ENCODE measurements at regions of chr2 and their contacts with region 1.

Region 1: DNA sequence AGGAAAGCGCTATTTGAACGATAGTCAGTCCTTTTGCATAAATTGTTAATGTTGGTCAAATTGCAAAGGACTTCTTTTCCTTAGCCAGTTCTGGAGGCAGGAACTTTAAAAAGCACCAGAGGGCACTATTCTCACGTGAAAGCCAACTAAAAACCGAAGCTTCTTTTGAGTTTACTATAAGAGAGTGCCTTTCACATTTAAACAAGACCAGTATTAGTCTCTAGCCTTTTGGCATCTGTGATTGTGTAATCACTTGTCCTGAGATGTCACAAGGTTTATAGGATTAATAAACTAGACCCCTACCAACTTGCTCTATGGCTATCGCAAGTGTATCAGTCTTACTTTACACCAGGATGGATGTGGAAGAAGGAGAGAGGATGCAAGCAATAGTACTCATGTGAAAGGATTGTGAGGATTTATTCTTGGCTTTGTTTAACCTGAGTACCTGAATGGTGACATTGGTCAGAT is 14.4 kb upstream of the STAT4 start:
- DNase-seq: peak; percentile 23 to 57
- H3K4me3 ChIP-seq: no peak overlapping the region
- H3K27ac ChIP-seq: no peak overlapping the region; the same call in 1 of the 2 replicates
- H3K4me1 ChIP-seq: peaks cover 49% of the 10 kb centered on the region
- H3K27me3 ChIP-seq: no peaks in the 10 kb centered on the region
- CTCF ChIP-seq: peak; percentile 80

Region 2: DNA sequence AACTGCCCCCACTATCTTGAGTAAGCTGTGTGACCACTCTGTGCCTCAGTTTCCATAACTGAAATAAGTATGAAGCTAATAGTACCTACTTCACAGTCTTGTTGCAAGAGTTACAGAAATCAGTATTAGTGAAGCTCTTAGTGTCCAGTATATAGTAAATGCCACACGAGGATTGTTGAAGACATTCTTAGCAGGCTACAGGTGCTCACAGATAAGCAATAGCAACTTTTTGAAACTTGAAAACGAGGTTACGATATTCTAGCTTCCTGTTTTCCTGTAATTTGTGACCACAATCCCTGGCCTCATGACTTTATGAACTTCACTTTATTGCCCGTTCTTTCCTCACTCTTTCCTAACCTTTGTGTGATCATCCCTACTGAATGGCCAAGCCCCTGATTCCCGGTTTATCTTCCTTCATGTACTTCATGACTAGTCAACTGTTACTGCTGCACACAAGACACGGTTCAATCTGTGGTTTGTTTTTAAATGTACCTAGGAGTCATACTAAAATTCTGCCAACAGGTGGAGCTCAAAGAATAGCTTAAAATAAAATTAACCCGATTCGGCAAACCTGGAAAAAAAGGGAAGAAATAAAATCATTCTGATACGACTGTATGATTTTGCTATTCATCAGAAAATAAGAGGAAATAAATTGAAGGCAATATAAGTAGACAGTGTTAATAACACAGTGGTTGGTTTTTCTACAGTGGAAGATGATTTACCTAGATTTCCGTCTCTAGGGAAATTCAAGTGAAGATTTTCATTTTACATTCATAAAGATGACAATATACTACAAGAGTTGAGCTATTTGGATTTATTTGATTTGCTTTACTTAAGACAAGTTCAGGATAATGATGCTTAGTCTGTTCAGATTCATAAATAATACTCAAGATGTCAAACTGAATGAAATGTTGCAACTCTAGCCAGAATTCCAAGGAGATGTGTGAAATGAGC is 113.1 kb before region 1 on chr2:
- CTCF ChIA-PET with region 1: interaction called, 3 read pairs
- POLR2A ChIA-PET with region 1: no interaction called
- intact Hi-C with region 1: loop called (anchors 2 kb)
- DNase-seq: no peak
- H3K4me3 ChIP-seq: no peak overlapping the region
- H3K27ac ChIP-seq: no peak overlapping the region
- H3K4me1 ChIP-seq: peaks cover 13% of the 10 kb centered on the region
- H3K27me3 ChIP-seq: no peaks in the 10 kb centered on the region
- CTCF ChIP-seq: peak; percentile 73

Region 3: GRCh38 chr2:191218292-191218898 is 53.2 kb after region 1 on chr2:
- CTCF ChIA-PET with region 1: no interaction called
- POLR2A ChIA-PET with region 1: interaction called, 3 read pairs
- intact Hi-C with region 1: loop called (anchors 1 kb)
- DNase-seq: peak in 1 of 2 experiments; percentile 19
- H3K4me3 ChIP-seq: no peak overlapping the region
- H3K27ac ChIP-seq: peak overlapping the region; percentile 94
- H3K4me1 ChIP-seq: peaks cover 43% of the 10 kb centered on the region
- H3K27me3 ChIP-seq: no peaks in the 10 kb centered on the region
- CTCF ChIP-seq: peak; percentile 51

Region 4: GRCh38 chr2:191302459-191303139 is 137.4 kb after region 1 on chr2:
- CTCF ChIA-PET with region 1: no interaction called
- POLR2A ChIA-PET with region 1: interaction called, 5 read pairs
- intact Hi-C with region 1: loop called (anchors 5 kb)
- DNase-seq: peak; percentile 37 to 40
- H3K4me3 ChIP-seq: no peak overlapping the region
- H3K27ac ChIP-seq: no peak overlapping the region
- H3K4me1 ChIP-seq: peaks cover 12% of the 10 kb centered on the region
- H3K27me3 ChIP-seq: no peaks in the 10 kb centered on the region
- CTCF ChIP-seq: peak; percentile 46; the same call in 1 of the 2 replicates

Region 5: DNA sequence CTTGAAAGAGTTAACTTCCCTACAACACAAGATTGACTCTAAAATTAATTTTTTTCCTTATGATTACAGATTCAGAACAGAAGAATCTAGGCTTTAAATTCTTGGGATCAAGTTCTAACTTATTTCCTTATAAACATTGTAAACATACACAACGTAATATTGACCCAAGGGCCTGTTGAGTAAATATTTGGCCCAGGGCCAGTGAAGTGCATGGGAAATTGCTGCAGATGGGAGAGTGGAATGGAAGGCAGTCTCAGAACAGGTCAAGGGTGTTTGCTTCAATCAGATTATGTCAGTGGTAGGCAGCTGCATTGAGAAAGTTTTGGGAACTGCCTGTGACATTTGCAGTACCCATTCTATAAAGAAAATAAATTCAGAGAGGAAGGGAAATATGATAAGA is 217.6 kb after region 1 on chr2:
- CTCF ChIA-PET with region 1: no interaction called
- POLR2A ChIA-PET with region 1: no interaction called
- intact Hi-C with region 1: loop called (anchors 5 kb)
- DNase-seq: peak; percentile 46 to 90
- H3K4me3 ChIP-seq: no peak overlapping the region
- H3K27ac ChIP-seq: peak overlapping the region; percentile 76
- H3K4me1 ChIP-seq: peaks cover 18% of the 10 kb centered on the region
- H3K27me3 ChIP-seq: no peaks in the 10 kb centered on the region
- CTCF ChIP-seq: no peak

Region 6: GRCh38 chr2:191501561-191502168 is 336.5 kb after region 1 on chr2:
- CTCF ChIA-PET with region 1: interaction called, 5 read pairs
- POLR2A ChIA-PET with region 1: no interaction called
- intact Hi-C with region 1: loop called (anchors 1 kb)
- DNase-seq: no peak
- H3K4me3 ChIP-seq: no peak overlapping the region
- H3K27ac ChIP-seq: no peak overlapping the region
- H3K4me1 ChIP-seq: no peaks in the 10 kb centered on the region
- H3K27me3 ChIP-seq: no peaks in the 10 kb centered on the region
- CTCF ChIP-seq: peak; percentile 57

Region 7: DNA sequence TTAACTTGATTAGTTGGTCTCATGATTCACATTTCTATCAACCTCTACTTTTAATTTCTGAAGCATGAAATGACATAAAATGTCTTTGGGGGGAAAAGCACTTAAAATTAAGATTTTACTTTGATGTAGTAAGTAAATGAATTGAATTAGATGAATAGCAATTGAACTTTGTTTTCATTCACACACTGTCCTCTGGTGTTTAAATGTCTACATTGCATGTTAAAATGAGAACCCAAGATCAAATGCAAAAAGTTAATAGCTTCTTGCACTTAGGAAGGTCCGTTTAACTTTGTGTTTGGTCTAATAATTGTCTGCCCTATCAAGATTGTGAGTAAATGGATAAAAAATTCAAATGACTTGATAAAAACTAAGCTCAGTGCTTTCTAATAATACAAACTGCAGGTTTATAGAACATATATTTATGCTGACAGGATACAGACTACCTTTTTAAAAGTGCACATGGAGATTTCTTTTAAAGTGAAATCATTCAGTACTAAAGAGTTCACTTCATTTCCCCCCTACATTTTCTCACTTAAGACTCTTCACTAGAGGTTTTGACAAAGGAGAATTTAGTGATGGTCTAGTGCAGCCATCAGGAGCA is 356.5 kb after region 1 on chr2:
- CTCF ChIA-PET with region 1: interaction called, 3 read pairs
- POLR2A ChIA-PET with region 1: interaction called, 3 read pairs
- intact Hi-C with region 1: loop called (anchors 1 kb)
- DNase-seq: no peak
- H3K4me3 ChIP-seq: no peak overlapping the region
- H3K27ac ChIP-seq: no peak overlapping the region
- H3K4me1 ChIP-seq: no peaks in the 10 kb centered on the region
- H3K27me3 ChIP-seq: no peaks in the 10 kb centered on the region
- CTCF ChIP-seq: peak; percentile 75